GM13976 (cell line): ENCODE measurements at regions of chr2 and their contacts with region 1.

Region 1: GRCh38 chr2:39227628-39228412 is 15.9 kb downstream of the CDKL4 start:
- DNase-seq: peak; percentile 72
- CTCF ChIP-seq: peak; percentile 85

Region 2: DNA sequence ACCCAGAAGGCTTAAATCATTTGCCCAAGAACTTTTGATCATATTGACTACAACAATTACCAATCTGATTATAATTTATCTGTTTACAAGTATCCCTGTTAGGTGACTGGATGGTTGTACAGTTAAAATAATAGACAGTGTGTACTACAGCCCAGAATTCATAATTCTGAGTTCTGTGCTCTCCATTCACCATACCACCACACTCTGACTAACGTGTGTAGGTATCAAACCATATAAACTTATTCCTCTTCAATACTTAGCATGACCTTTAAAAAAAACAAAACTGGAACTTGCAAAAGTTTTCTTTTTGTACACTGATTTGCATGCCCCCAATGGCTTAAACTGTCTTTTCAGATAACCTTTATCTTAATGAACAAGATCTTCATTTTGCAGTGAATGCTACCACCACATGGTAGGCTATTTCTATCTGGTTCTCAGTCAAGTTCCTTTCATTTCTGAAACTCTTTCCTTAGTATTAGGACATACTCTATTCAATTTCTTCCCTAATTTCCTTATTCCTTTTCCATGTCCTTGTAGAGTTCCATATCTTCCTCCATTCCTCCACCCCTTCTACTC is 157.8 kb before region 1 on chr2:
- in situ Hi-C with region 1: loop called (anchors 10 kb)
- DNase-seq: no peak
- CTCF ChIP-seq: no peak

Region 3: GRCh38 chr2:39124000-39124745 is 103.6 kb before region 1 on chr2:
- in situ Hi-C with region 1: loop called (anchors 10 kb)
- DNase-seq: peak; percentile 92
- CTCF ChIP-seq: peak; percentile 53